Activated T-helper 1 cell treated with anti-CD3 and anti-CD28 coated beads, Interleukin-12 subunit alpha, Interleukin-12 subunit beta, Interleukin-2, Interleukin-4 antibody, amounts not matched to agents 30 ng/mL and 10 ng/mL and 1 ng/mL, durations not matched to agents 14 hours and 24 hours and 36 hours (primary cell): ENCODE measurements at regions of chr14 and their contacts with region 1.

Region 1: DNA sequence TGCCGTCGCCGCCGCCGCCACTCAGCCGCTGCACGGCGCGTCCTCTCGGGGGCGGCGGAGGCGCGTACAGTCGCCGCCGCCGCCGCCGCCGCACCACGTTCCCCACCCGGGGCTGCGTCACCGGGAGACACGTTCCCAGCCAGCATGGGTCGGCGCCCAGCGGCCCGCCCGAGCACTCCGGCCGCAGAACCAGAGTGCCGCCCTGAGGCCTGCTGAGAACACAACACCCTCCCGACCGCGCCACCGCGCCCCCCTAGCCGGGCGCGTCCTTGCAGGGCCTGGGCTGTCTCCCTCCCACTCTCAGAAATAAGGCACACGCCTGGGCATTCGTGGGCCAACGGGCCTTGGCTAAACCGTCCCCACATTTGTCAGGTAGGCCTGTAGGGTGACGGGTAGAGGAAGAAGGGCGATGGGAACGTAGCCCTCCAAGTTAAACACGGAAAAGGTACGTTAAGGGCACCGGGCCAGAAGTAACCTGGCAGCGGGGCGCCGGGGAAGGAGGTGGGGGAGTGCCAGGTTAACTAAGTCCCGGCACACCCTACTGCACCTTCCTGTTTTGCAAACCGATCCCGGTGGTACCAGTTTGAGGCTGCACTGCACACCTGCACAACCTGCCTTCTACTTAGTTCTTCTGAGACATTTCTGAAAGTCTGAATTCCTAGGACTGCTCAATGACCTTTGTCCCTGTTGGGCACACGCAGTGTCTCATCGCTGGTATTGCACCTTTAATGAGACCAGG is at the start of gene MAP4K5:
- DNase-seq: peak; percentile 82
- H3K4me3 Mint-ChIP-seq: peak within 1 kb of the TSS; percentile 92
- H3K27ac Mint-ChIP-seq: peak within 1 kb of the TSS; percentile 79
- H3K4me1 Mint-ChIP-seq: peaks cover 42% of the 10 kb centered on the region
- H3K27me3 Mint-ChIP-seq: peaks cover 24% of the 10 kb centered on the region
- total RNA-seq, gene MAP4K5: 26.4 and 27.5 TPM in 2 replicates

Region 2: DNA sequence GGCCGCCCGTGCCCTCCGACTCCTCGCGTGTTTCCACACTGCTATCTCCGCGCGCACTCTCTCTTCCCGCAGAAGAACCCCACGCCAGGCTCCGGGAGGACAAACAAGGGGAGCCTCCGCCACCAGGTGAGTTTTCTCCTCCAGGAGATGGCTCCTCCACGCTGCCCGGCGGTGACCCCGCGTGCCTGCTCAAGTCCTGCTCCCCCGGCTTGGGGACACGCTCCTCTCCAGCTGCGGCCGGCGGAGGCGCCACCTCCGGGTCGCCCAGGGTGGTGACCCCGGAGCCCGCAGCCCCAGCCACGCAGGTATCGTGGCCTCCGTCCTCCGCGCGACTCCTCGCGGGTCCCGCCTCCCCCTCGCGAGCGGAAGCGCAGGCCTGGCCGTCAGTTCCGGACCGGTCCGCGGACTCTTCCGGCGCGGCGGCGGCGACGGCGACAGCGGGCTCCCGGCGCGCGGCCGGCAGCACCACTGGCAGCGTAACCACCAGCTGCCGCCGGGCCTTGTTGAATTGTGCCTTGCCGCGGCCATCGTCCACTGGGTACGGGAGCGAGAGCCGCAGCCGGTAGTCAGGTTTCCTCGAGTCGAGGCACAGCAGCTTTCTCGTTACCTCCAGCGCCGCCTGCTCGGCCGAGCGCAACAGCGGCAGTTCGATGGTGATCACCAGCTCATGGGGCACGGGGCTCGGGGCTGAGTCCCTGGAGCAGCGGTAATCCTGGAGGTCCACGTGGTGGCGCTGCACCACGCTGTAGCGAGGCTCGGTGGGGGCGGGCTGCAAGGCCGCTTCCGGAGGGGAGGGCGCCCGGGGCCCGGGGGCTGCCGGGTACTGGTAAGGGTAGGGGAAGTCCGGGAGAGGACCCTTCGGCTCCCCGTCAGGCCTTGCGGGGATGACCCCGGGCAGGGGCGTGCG is 898.8 kb before region 1 on chr14:
- intact Hi-C with region 1: loop called (anchors 5 kb)
- DNase-seq: peak; percentile 93
- H3K4me3 Mint-ChIP-seq: peak overlapping the region; percentile 93
- H3K27ac Mint-ChIP-seq: peak overlapping the region; percentile 96
- H3K4me1 Mint-ChIP-seq: peaks cover 39% of the 10 kb centered on the region
- H3K27me3 Mint-ChIP-seq: no peaks in the 10 kb centered on the region

Region 3: GRCh38 chr14:49879683-49880204 is 652.9 kb before region 1 on chr14:
- intact Hi-C with region 1: loop called (anchors 1 kb)
- DNase-seq: peak; percentile 45
- H3K4me3 Mint-ChIP-seq: no peak overlapping the region
- H3K27ac Mint-ChIP-seq: peak overlapping the region; percentile 61
- H3K4me1 Mint-ChIP-seq: peaks cover 34% of the 10 kb centered on the region
- H3K27me3 Mint-ChIP-seq: peaks cover 3% of the 10 kb centered on the region

Region 4: DNA sequence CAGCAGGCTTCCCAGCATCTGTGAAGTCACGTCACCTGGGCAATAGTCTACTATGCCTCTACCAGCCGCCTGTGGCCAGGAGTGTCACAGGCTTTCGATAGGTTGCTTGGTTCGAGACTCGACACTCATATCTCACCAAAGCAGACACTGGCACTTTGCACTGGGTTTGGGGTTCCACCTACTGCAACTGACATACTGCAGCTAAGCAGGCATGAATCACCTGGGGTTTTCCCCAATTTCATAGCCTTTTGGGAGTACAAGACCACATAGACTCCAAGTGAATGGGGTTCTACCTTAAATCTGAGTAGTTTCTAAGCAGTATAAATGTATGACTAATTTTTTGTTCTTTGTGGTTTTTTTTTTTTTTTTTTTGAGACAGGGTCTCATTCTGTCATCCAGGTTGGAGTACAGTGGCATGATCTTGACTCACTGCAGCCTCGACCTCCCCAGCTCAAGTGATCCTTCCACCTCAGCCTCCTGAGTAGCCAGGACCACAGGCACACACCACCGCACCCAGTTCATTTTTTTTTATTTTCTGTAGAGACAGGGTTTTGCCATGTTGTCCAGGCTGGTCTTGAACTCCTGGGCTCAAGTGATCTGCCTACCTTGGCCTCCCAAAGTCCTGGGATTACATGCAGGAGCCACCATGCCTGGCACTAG is 188.4 kb before region 1 on chr14:
- intact Hi-C with region 1: loop called (anchors 1 kb)
- DNase-seq: peak; percentile 47
- H3K4me3 Mint-ChIP-seq: peak overlapping the region; percentile 30
- H3K27ac Mint-ChIP-seq: peak overlapping the region; percentile 69
- H3K4me1 Mint-ChIP-seq: peaks cover 32% of the 10 kb centered on the region
- H3K27me3 Mint-ChIP-seq: peaks cover 18% of the 10 kb centered on the region

Region 5: DNA sequence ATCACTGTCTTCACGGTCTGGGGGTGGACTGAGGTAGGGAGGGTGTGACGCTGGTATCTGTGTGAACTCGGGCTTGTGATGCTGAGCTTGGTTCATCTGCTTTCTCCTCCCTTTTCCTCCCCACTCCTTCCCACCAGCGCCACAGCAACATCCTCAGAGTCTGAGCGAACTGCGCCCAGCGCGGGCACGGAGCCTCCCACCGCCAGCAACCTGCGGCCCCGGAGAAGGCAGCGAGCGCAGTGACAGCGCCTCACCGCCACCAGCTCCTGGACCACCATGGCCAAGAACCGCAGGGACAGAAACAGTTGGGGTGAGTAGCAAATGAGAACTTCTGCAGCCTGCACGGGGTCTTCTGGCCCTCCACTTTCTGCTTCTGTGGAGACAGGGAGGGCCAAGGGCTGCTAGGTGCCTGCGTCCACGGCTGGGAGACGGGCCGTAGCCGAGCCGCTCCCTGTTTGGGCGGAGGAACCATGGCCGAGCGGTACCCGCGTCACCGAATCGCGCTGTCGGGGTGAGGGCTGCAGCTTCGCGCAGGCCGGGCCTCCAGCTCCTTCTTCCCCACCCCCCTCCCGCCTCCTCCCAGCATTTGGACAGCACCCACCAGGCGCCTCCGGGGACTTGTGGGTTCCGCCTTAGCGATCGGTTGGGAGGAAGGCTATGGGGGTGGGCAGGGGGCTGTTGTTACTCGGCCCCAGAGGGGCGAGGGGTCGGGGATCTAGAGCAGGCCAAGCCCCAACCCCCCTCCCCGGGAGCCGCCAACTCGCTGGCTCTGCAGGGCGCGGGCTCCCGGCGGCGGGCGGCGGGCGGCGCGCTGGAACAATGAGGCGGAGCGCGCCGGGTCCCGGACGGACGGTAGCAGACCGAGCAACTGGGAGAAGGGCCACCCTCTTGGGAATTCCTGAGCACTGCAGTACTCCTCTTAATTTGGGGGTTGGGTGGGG is 27.6 kb after region 1 on chr14 and contains the start of gene ATL1:
- intact Hi-C with region 1: loop called (anchors 1 kb)
- DNase-seq: peak; percentile 22
- H3K4me3 Mint-ChIP-seq: peak within 1 kb of the TSS; percentile 83
- H3K27ac Mint-ChIP-seq: peak within 1 kb of the TSS; percentile 5
- H3K4me1 Mint-ChIP-seq: peaks cover 20% of the 10 kb centered on the region
- H3K27me3 Mint-ChIP-seq: peaks cover 66% of the 10 kb centered on the region
- total RNA-seq, gene ATL1: 0.83 and 1.2 TPM in 2 replicates

Region 6: GRCh38 chr14:50688875-50689274 is 156.2 kb after region 1 on chr14:
- intact Hi-C with region 1: no loop called
- DNase-seq: no peak
- H3K4me3 Mint-ChIP-seq: no peak overlapping the region
- H3K27ac Mint-ChIP-seq: no peak overlapping the region
- H3K4me1 Mint-ChIP-seq: no peaks in the 10 kb centered on the region
- H3K27me3 Mint-ChIP-seq: peaks cover 16% of the 10 kb centered on the region